CD4-positive, alpha-beta T cell (primary cell): ENCODE measurements at regions of chr14 and their contacts with region 1.

Region 1: GRCh38 chr14:22549981-22550673 is 38.9 kb downstream of the DAD1 start:
- DNase-seq: peak in 12 of 14 experiments; percentile 44 to 84 (median 65)
- ATAC-seq: peak; percentile 62
- H3K4me3 ChIP-seq: peak overlapping the region; percentile 10
- H3K4me3 Mint-ChIP-seq: peak overlapping the region; percentile 85
- H3K27ac ChIP-seq: peak overlapping the region; percentile 99
- H3K27ac Mint-ChIP-seq: peak overlapping the region; percentile 93
- H3K4me1 ChIP-seq: peaks cover 100% of the 10 kb centered on the region
- H3K4me1 Mint-ChIP-seq: peaks cover 97% of the 10 kb centered on the region
- H3K27me3 ChIP-seq: no peaks in the 10 kb centered on the region
- H3K27me3 Mint-ChIP-seq: no peaks in the 10 kb centered on the region
- CTCF ChIP-seq: no peak

Region 2: DNA sequence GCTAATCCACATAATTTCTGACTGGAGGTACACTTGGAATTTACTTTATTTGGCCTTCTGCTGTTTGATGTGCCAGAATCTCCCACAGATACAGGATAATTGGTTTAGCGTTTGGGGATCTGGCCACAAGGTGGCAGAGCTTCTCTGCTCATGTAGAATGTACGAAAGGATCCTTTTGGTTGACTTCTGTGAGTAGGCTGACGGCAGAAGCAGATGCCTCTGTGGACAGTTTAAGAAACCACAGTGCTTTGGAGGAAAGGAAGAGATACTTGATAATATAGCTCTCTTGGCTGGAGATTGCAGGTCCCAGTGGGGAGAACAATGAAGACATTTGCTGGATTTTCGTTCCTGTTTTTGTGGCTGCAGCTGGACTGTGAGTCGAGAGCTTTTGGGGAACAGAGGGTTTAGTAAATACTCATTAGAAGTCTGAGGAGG is 801.2 kb before region 1 on chr14:
- CTCF ChIA-PET with region 1: no interaction called
- POLR2A ChIA-PET with region 1: interaction called, 7 read pairs
- intact Hi-C with region 1: loop called in 1 of 2 experiments (anchors 5 kb)
- DNase-seq: peak; percentile 14 to 76 (median 44)
- ATAC-seq: peak; percentile 78
- H3K4me3 ChIP-seq: peak overlapping the region; percentile 17
- H3K4me3 Mint-ChIP-seq: peak overlapping the region; percentile 26
- H3K27ac ChIP-seq: no peak overlapping the region
- H3K27ac Mint-ChIP-seq: peak overlapping the region; percentile 57
- H3K4me1 ChIP-seq: no peaks in the 10 kb centered on the region
- H3K4me1 Mint-ChIP-seq: peaks cover 11% of the 10 kb centered on the region
- H3K27me3 ChIP-seq: no peaks in the 10 kb centered on the region
- H3K27me3 Mint-ChIP-seq: peaks cover 26% of the 10 kb centered on the region
- CTCF ChIP-seq: peak; percentile 78

Region 3: GRCh38 chr14:22466491-22466890 is 83.6 kb before region 1 on chr14:
- CTCF ChIA-PET with region 1: no interaction called
- POLR2A ChIA-PET with region 1: no interaction called
- intact Hi-C with region 1: no loop called
- DNase-seq: no peak
- ATAC-seq: no peak
- H3K4me3 ChIP-seq: no peak overlapping the region
- H3K4me3 Mint-ChIP-seq: no peak overlapping the region
- H3K27ac ChIP-seq: no peak overlapping the region
- H3K27ac Mint-ChIP-seq: no peak overlapping the region
- H3K4me1 ChIP-seq: no peaks in the 10 kb centered on the region
- H3K4me1 Mint-ChIP-seq: no peaks in the 10 kb centered on the region
- H3K27me3 ChIP-seq: no peaks in the 10 kb centered on the region
- H3K27me3 Mint-ChIP-seq: no peaks in the 10 kb centered on the region
- CTCF ChIP-seq: no peak

Region 4: DNA sequence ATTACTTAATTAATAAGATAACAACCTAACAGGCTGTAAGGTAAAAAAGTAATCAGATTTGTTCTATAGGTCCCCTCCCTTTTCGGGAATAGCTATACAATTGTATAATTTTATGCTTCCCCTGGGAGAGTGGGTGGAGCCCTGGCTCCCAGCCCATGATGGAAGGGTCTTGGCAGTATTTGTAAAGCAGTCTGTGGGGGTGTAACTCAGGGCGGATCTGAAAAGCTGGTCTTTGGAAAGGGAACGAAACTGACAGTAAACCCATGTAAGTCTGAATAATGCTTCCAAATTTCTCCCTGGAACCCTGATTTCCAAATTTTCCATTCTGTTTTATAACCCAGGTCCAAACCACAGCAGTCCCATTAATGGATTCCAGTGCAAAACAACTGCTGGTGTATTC is 71.5 kb before region 1 on chr14:
- CTCF ChIA-PET with region 1: no interaction called
- POLR2A ChIA-PET with region 1: no interaction called
- intact Hi-C with region 1: no loop called
- DNase-seq: no peak
- ATAC-seq: no peak
- H3K4me3 ChIP-seq: peak overlapping the region; percentile 55
- H3K4me3 Mint-ChIP-seq: peak overlapping the region; percentile 70
- H3K27ac ChIP-seq: no peak overlapping the region
- H3K27ac Mint-ChIP-seq: peak overlapping the region; percentile 44
- H3K4me1 ChIP-seq: no peaks in the 10 kb centered on the region
- H3K4me1 Mint-ChIP-seq: no peaks in the 10 kb centered on the region
- H3K27me3 ChIP-seq: no peaks in the 10 kb centered on the region
- H3K27me3 Mint-ChIP-seq: no peaks in the 10 kb centered on the region
- CTCF ChIP-seq: no peak

Region 5: DNA sequence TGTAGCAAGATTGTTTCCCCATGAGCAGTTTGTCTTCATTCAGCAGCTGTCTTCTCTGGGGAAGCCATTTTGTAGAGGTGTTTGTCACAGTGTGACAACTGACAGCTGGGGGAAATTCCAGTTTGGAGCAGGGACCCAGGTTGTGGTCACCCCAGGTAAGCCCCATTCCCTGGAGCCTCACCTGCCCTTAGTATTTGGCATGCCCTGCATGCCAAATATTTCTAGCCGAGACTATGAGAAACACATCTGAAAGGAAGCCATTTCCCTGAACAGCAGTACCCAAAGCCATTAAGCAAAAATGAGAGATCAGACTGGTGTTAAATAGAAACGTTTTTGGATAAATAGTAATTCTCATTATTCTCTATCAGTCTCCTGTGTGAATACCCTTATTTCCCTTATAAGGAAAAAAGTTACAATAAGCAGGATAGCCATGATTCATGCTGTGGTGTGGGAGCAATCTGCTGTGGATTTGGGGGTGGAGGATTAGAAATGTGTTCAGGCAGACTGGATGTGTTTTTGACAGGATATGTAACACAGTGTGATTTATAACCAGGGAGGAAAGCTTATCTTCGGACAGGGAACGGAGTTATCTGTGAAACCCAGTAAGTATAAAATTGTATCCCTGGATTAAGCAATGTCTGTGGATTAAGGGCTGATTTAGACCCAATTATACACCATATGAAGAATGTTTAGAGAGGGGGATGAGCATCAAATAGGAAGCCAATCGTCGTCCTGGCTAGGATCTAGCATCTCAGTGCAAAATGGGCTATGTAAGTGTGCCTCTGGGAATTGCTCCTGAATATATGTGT is 30.0 kb before region 1 on chr14:
- CTCF ChIA-PET with region 1: interaction called, 41 read pairs
- POLR2A ChIA-PET with region 1: interaction called, 613 read pairs
- intact Hi-C with region 1: loop called in 1 of 2 experiments (anchors 5 kb)
- DNase-seq: peak in 2 of 14 experiments; percentile 30 to 61
- ATAC-seq: peak; percentile 19
- H3K4me3 ChIP-seq: peak overlapping the region; percentile 61
- H3K4me3 Mint-ChIP-seq: peak overlapping the region; percentile 86
- H3K27ac ChIP-seq: peak overlapping the region; percentile 85 to 99
- H3K27ac Mint-ChIP-seq: peak overlapping the region; percentile 93
- H3K4me1 ChIP-seq: peaks cover 89% of the 10 kb centered on the region
- H3K4me1 Mint-ChIP-seq: peaks cover 100% of the 10 kb centered on the region
- H3K27me3 ChIP-seq: no peaks in the 10 kb centered on the region
- H3K27me3 Mint-ChIP-seq: no peaks in the 10 kb centered on the region
- CTCF ChIP-seq: no peak

Region 6: GRCh38 chr14:22536853-22537338 is 13.2 kb before region 1 on chr14:
- CTCF ChIA-PET with region 1: interaction called, 34 read pairs
- POLR2A ChIA-PET with region 1: interaction called, 331 read pairs
- intact Hi-C with region 1: loop called in 1 of 2 experiments (anchors 1 kb)
- DNase-seq: peak in 13 of 14 experiments; percentile 66 to 92 (median 74)
- ATAC-seq: peak; percentile 85
- H3K4me3 ChIP-seq: peak overlapping the region; percentile 61
- H3K4me3 Mint-ChIP-seq: peak overlapping the region; percentile 81
- H3K27ac ChIP-seq: peak overlapping the region; percentile 61 to 99
- H3K27ac Mint-ChIP-seq: peak overlapping the region; percentile 93
- H3K4me1 ChIP-seq: peaks cover 86% of the 10 kb centered on the region
- H3K4me1 Mint-ChIP-seq: peaks cover 99% of the 10 kb centered on the region
- H3K27me3 ChIP-seq: no peaks in the 10 kb centered on the region
- H3K27me3 Mint-ChIP-seq: no peaks in the 10 kb centered on the region
- CTCF ChIP-seq: no peak